ENCODE measurements at regions of chr12 and their contacts with region 1.

Region 1: DNA sequence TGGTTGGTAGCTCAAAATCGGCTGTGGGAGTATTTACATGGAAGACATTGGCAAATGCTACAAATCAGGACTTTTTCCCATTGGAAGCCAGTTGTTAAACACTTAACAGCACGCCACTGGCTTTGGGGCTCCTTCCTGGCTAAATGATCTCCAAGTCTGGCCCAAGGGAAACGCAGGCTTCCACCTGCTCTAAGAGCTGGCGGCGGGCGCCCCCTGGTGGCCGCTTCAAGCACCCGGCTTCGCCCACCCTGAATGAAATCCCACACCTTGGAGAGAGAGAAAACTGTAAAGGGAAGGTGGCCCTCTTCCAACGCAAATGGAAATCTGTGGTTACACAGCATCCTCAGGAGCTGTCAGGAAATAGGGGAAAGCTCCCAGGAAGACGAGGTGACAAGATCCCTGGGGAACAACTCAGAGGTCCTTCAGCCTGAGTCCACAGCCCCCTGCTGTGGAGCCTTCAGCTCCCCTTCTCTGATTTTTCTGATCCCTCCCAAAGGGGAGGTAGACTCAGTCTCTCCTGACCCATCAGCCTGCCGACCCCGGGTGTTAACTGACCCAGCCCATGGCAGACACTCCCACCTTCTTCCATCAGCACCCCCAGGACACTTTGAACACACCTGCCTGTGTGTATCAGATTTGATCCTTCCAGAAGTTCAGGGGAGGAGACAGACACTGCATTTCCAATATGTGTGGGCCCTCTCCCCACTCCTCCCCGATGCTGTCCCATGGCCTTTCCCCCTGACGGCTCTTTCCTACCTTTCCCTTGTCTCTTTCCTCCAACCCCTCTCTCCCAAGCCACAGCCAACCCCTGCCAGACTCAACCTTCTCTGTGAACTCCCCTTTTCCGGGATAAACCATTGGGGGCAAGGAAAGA is 15.4 kb downstream of the SELPLG start:
- DNase-seq: peak; percentile 71
- H3K4me3 ChIP-seq: no peak overlapping the region
- H3K27ac ChIP-seq: no peak overlapping the region
- H3K4me1 ChIP-seq: peaks cover 13% of the 10 kb centered on the region
- H3K27me3 ChIP-seq: no peaks in the 10 kb centered on the region
- CTCF ChIP-seq: peak; percentile 92 to 96
- POLR2A ChIP-seq: no peak

Region 2: GRCh38 chr12:108570743-108571608 is 47.3 kb before region 1 on chr12:
- CTCF ChIA-PET with region 1: interaction called, 86 read pairs
- POLR2A ChIA-PET with region 1: no interaction called
- dilution Hi-C with region 1: no loop called
- intact Hi-C with region 1: loop called (anchors 1 kb)
- DNase-seq: peak; percentile 39
- H3K4me3 ChIP-seq: no peak overlapping the region
- H3K27ac ChIP-seq: no peak overlapping the region
- H3K4me1 ChIP-seq: peaks cover 8% of the 10 kb centered on the region
- H3K27me3 ChIP-seq: no peaks in the 10 kb centered on the region
- CTCF ChIP-seq: peak; percentile 8 to 13
- POLR2A ChIP-seq: no peak

Region 3: GRCh38 chr12:108576660-108577234 is 41.6 kb before region 1 on chr12:
- CTCF ChIA-PET with region 1: interaction called, 86 read pairs
- POLR2A ChIA-PET with region 1: no interaction called
- dilution Hi-C with region 1: no loop called
- intact Hi-C with region 1: no loop called
- DNase-seq: no peak
- H3K4me3 ChIP-seq: no peak overlapping the region
- H3K27ac ChIP-seq: no peak overlapping the region
- H3K4me1 ChIP-seq: no peaks in the 10 kb centered on the region
- H3K27me3 ChIP-seq: no peaks in the 10 kb centered on the region
- CTCF ChIP-seq: no peak
- POLR2A ChIP-seq: no peak

Region 4: GRCh38 chr12:108633534-108634248 is 15.4 kb after region 1 on chr12 and contains the start of gene SELPLG:
- CTCF ChIA-PET with region 1: interaction called, 37 read pairs
- POLR2A ChIA-PET with region 1: interaction called, 4 read pairs
- dilution Hi-C with region 1: no loop called
- intact Hi-C with region 1: no loop called
- DNase-seq: no peak
- H3K4me3 ChIP-seq: no peak within 1 kb of the TSS
- H3K27ac ChIP-seq: no peak within 1 kb of the TSS
- H3K4me1 ChIP-seq: peaks cover 29% of the 10 kb centered on the region
- H3K27me3 ChIP-seq: no peaks in the 10 kb centered on the region
- CTCF ChIP-seq: no peak
- POLR2A ChIP-seq: no peak
- total RNA-seq, gene SELPLG: 0.62 and 1.2 TPM in 2 replicates

Region 5: DNA sequence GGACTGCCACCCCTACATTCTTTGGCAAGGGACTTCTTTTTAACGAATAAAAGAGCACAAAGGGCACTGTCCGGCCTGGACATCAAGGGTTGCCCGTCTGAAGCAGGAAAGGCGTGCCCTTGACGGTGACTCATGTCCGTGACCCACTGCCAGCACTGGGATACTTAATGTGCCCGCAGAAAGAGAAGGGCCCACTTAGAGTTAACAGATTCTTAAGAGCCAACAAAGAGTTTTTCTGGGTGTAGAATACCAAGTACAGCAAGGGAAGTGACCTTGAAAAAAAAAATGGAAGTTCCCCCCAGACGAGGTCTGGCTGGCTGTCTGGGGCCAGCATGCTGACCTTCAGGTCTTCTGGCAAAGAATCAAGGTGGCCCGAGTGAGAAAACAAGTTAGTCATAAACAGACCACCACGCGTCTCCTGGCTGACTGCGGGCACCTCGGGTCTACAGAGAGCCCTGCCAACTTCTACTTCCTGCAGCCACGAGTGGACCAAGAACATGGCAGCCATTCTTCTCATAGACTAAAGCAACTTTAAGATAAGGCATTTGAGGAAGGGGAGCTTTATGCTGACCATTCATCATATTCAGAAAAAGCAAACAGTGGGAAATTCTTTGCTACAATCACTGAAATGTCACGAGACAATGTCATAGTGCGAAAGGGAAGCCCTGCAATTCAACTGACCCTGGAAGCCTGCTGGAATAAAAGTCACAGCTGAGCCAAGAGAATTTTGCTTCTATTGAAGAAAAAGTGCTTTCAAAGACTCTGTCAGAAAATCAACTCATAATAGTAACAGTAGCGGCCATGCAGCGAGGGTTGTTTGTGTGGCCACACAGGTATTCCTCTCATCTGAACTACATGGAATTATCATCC is 25.9 kb after region 1 on chr12:
- CTCF ChIA-PET with region 1: interaction called, 26 read pairs
- POLR2A ChIA-PET with region 1: no interaction called
- dilution Hi-C with region 1: no loop called
- intact Hi-C with region 1: loop called (anchors 1 kb)
- DNase-seq: peak; percentile 92
- H3K4me3 ChIP-seq: no peak overlapping the region
- H3K27ac ChIP-seq: peak overlapping the region; percentile 76
- H3K4me1 ChIP-seq: peaks cover 48% of the 10 kb centered on the region
- H3K27me3 ChIP-seq: no peaks in the 10 kb centered on the region
- CTCF ChIP-seq: no peak
- POLR2A ChIP-seq: no peak

Region 6: DNA sequence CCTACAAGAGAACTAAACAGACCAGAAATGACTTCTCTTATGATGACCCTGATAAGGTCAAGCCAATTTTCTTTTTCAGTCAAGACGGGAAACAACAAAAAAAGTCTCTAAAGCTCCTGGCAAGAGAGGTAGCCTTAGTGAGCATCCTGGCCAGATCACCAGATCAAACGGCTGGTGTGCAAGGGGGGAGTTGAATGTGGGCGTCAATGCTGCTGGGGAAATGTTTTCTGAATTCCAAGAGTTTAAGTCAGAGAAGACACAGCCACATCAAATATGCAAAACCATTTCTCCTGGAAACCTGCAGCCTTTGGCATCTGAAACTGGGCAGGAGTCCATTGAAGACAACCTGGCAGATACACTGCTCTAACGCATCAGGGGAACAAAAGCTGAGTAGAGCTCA is 31.4 kb after region 1 on chr12:
- CTCF ChIA-PET with region 1: interaction called, 26 read pairs
- POLR2A ChIA-PET with region 1: no interaction called
- dilution Hi-C with region 1: no loop called
- intact Hi-C with region 1: loop called (anchors 1 kb)
- DNase-seq: peak; percentile 76
- H3K4me3 ChIP-seq: no peak overlapping the region
- H3K27ac ChIP-seq: peak overlapping the region; percentile 14
- H3K4me1 ChIP-seq: peaks cover 48% of the 10 kb centered on the region
- H3K27me3 ChIP-seq: no peaks in the 10 kb centered on the region
- CTCF ChIP-seq: no peak
- POLR2A ChIP-seq: no peak